Activated B cell treated with CpG ODN at 0.5 μM for 24 hours (primary cell): ENCODE measurements at regions of chrX and their contacts with region 1.

Region 1: GRCh38 chrX:154428176-154429010 is at the start of gene ATP6AP1:
- DNase-seq: peak; percentile 77
- ATAC-seq: peak; percentile 99
- H3K4me3 Mint-ChIP-seq: peak within 1 kb of the TSS; percentile 81
- H3K27ac Mint-ChIP-seq: peak within 1 kb of the TSS; percentile 71
- H3K4me1 Mint-ChIP-seq: peaks cover 23% of the 10 kb centered on the region
- H3K27me3 Mint-ChIP-seq: no peaks in the 10 kb centered on the region
- CTCF ChIP-seq: no peak
- total RNA-seq, gene ATP6AP1: 36.6 and 38.8 TPM in 2 replicates

Region 2: DNA sequence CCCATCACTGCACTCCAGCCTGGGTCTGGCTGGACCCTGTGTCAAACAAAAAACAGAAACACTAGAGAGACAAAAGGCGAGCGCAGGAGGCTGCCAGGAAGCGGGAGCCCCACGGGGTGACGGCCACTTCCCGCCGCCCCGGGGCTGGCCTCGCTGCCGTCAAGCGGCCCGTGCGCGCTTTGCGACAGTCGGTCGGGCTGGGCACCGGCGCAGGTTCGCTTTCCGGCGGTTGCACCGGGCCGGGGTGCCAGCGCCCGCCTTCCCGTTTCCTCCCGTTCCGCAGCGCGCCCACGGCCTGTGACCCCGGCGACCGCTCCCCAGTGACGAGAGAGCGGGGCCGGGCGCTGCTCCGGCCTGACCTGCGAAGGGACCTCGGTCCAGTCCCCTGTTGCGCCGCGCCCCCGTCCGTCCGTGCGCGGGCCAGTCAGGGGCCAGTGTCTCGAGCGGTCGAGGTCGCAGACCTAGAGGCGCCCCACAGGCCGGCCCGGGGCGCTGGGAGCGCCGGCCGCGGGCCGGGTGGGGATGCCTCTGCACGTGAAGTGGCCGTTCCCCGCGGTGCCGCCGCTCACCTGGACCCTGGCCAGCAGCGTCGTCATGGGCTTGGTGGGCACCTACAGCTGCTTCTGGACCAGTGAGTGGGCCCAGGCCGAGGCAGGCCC is 16.9 kb before region 1 on chrX and contains the start of gene TAFAZZIN:
- CTCF ChIA-PET with region 1: no interaction called
- POLR2A ChIA-PET with region 1: interaction called, 18 read pairs
- intact Hi-C with region 1: loop called (anchors 1 kb)
- DNase-seq: peak; percentile 60
- ATAC-seq: peak; percentile 69
- H3K4me3 Mint-ChIP-seq: peak within 1 kb of the TSS; percentile 88
- H3K27ac Mint-ChIP-seq: peak within 1 kb of the TSS; percentile 87
- H3K4me1 Mint-ChIP-seq: peaks cover 24% of the 10 kb centered on the region
- H3K27me3 Mint-ChIP-seq: no peaks in the 10 kb centered on the region
- CTCF ChIP-seq: no peak
- total RNA-seq, gene TAFAZZIN: 50.5 and 66.1 TPM in 2 replicates

Region 3: GRCh38 chrX:154593201-154593600 is 164.8 kb after region 1 on chrX:
- CTCF ChIA-PET with region 1: no interaction called
- POLR2A ChIA-PET with region 1: no interaction called
- intact Hi-C with region 1: no loop called
- DNase-seq: no peak
- ATAC-seq: no peak
- H3K4me3 Mint-ChIP-seq: no peak overlapping the region
- H3K27ac Mint-ChIP-seq: no peak overlapping the region
- H3K4me1 Mint-ChIP-seq: no peaks in the 10 kb centered on the region
- H3K27me3 Mint-ChIP-seq: peaks cover 9% of the 10 kb centered on the region
- CTCF ChIP-seq: no peak